ENCODE measurements at regions of chr6 and their contacts with region 1.

Region 1: GRCh38 chr6:136761227-136761922 is 30.9 kb downstream of the MAP3K5 start:
- DNase-seq: peak in 1 of 2 donors; percentile 16
- ATAC-seq: peak in 2 of 4 donors; percentile 38 to 39
- H3K4me3 ChIP-seq: peak overlapping the region; percentile 42
- H3K27ac ChIP-seq: peak overlapping the region; percentile 42
- H3K4me1 ChIP-seq: peaks cover 25% of the 10 kb centered on the region
- H3K27me3 ChIP-seq: no peaks in the 10 kb centered on the region
- CTCF ChIP-seq: no peak

Region 2: GRCh38 chr6:136719280-136720044 is 41.9 kb before region 1 on chr6:
- intact Hi-C with region 1: loop called in 1 of 2 experiments (anchors 5 kb)
- DNase-seq: no peak
- ATAC-seq: no peak
- H3K4me3 ChIP-seq: no peak overlapping the region
- H3K27ac ChIP-seq: no peak overlapping the region
- H3K4me1 ChIP-seq: peaks cover 10% of the 10 kb centered on the region
- H3K27me3 ChIP-seq: no peaks in the 10 kb centered on the region
- CTCF ChIP-seq: no peak

Measured in psoas muscle (tissue), 8 donors.